CD14-positive monocyte (primary cell): ENCODE measurements at regions of chr10 and their contacts with region 1.

Region 1: GRCh38 chr10:46106410-46107255 is 60.6 kb upstream of the MSMB start:
- DNase-seq: peak; percentile 24 to 52 (median 40)
- H3K4me3 ChIP-seq: peak overlapping the region; percentile 47 to 77 (median 72)
- H3K4me3 Mint-ChIP-seq: peak overlapping the region; percentile 79 to 96
- H3K27ac ChIP-seq: peak overlapping the region in 1 of 2 donors; percentile 64
- H3K27ac Mint-ChIP-seq: peak overlapping the region in 3 of 7 donors; percentile 46 to 79 (median 70)
- H3K4me1 ChIP-seq: peaks cover 5 to 26% of the 10 kb centered on the region in 2 donors
- H3K4me1 Mint-ChIP-seq: peaks cover 22% of the 10 kb centered on the region
- H3K27me3 ChIP-seq: peaks cover 8% of the 10 kb centered on the region in 2 donors
- H3K27me3 Mint-ChIP-seq: peaks cover 11 to 18% (median 15%) of the 10 kb centered on the region in 3 donors
- CTCF ChIP-seq: no peak

Region 2: DNA sequence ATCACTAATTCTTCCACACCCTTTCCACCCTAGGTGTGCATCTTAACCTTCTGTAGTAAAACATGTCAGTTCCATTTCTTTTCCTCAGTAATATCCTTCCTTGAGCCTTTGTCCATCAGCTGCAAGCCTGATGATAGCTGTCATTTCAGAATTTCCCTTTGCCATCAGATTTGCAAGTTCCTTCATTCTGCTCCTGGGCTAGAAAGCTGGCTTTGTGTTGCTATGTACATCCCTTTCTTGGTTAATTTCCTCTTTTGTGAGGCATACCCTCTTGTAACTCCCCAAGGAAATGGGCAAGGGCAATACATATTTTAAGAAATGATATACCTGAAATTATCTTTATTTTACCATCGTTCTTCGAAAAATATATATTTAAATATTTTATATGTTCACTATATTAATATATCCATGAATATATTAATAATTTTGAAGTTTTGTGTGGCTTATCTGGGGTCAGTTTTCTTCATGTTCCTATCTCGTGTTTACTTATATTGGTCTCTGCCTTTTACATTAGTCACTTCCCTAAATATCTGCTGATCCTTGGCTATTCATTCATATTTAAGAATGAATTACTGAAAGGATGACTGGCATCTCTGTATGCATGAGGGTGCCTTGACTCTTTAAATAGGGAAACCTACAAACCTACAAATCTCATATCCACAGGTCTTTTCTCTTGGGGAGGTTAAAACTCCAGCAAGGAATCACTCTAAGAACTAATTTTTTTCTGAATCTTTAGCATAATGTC is 962.1 kb before region 1 on chr10:
- intact Hi-C with region 1: no loop called
- DNase-seq: peak; percentile 3 to 56 (median 5)
- H3K4me3 ChIP-seq: no peak overlapping the region
- H3K4me3 Mint-ChIP-seq: no peak overlapping the region
- H3K27ac ChIP-seq: no peak overlapping the region
- H3K27ac Mint-ChIP-seq: peak overlapping the region in 1 of 7 donors; percentile 74
- H3K4me1 ChIP-seq: peaks cover 0 to 2% of the 10 kb centered on the region in 2 donors
- H3K4me1 Mint-ChIP-seq: peaks cover 9% of the 10 kb centered on the region
- H3K27me3 ChIP-seq: no peaks in the 10 kb centered on the region
- H3K27me3 Mint-ChIP-seq: no peaks in the 10 kb centered on the region
- CTCF ChIP-seq: no peak

Region 3: DNA sequence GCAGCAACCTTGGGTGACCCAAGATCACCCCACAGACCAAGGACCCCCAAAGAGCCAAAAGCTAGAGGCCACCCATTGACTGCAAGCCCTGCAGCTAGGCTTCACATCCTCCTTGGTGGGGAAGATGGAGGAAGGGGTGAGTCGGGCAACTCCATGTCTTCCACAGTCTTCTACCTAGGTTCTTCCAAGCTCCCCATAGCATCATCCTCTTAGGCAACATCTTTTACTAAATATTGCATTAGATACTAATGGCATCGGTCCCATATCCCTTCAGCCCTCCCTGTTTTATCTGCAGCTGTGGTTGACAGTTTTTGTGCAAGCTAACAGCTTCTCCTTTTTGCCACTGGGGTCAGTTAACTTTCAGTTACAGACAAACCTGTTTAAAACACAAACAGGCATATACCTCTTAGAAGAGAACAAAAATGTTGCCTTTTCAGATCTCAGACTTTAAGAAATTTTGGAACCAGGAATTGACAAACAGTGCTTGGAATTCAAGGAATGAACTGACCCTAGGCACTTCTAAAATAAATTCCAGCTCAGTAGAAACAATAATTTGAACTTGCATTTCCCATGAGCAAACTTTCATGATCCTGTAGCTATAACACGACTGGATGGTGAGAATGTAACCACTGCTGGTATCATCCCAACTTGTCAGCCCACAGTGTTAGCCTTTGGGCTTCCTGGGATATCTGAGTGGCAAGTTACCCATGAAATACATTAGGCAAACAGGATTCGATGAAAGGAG is 26.6 kb before region 1 on chr10:
- intact Hi-C with region 1: no loop called
- DNase-seq: peak; percentile 38 to 54 (median 50)
- H3K4me3 ChIP-seq: peak overlapping the region in 1 of 3 experiments; percentile 29
- H3K4me3 Mint-ChIP-seq: peak overlapping the region in 1 of 2 donors; percentile 70
- H3K27ac ChIP-seq: peak overlapping the region; percentile 58 to 87
- H3K27ac Mint-ChIP-seq: peak overlapping the region; percentile 74 to 96 (median 88)
- H3K4me1 ChIP-seq: peaks cover 51 to 61% of the 10 kb centered on the region in 2 donors
- H3K4me1 Mint-ChIP-seq: peaks cover 66% of the 10 kb centered on the region
- H3K27me3 ChIP-seq: no peaks in the 10 kb centered on the region
- H3K27me3 Mint-ChIP-seq: peaks cover 0 to 2% (median 0%) of the 10 kb centered on the region in 3 donors
- CTCF ChIP-seq: no peak

Region 4: GRCh38 chr10:46216836-46217751 is 110.5 kb after region 1 on chr10:
- intact Hi-C with region 1: no loop called
- DNase-seq: peak in 2 of 3 donors; percentile 5 to 15
- H3K4me3 ChIP-seq: no peak overlapping the region
- H3K4me3 Mint-ChIP-seq: peak overlapping the region; percentile 62
- H3K27ac ChIP-seq: no peak overlapping the region
- H3K27ac Mint-ChIP-seq: peak overlapping the region in 1 of 7 donors; percentile 64
- H3K4me1 ChIP-seq: no peaks in the 10 kb centered on the region
- H3K4me1 Mint-ChIP-seq: peaks cover 14% of the 10 kb centered on the region
- H3K27me3 ChIP-seq: no peaks in the 10 kb centered on the region
- H3K27me3 Mint-ChIP-seq: peaks cover 0 to 6% (median 2%) of the 10 kb centered on the region in 3 donors
- CTCF ChIP-seq: no peak

Region 5: DNA sequence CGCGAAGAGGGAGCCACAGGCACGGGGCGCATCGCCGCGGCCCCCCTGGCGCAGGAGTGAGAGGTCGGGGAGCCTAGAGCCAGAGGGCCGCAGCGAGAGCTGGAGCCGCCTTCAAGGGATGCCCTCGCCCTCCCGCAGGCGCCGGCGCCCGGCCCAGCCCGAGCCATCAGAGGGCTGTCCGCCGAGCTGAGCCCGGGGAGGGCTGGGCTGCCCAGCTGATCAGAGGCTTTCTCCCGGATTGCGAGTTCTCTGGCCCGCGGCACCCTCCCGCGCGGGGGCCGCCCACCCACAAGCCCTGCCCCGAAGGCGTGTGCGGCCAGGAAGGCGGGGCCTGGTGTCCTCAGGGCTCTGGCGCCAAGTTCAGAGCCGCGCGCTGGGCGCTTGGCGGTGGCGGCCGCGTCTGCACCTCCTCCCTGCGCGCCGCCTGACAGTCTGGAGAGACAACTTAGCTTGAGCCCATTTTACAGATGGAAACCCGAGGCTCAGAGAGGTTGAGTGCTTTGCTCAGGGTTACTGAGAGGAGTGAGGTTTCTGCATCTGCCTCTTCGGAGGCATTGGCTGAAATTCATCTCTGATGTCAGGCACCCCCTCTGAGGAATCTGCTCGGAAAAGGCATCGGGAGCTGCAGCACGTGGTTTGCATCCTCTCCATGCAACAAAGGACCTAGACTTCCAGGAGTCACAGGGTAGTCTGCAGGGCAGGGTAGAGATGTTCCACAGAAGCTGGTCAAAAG is 176.4 kb after region 1 on chr10:
- intact Hi-C with region 1: loop called in 1 of 2 experiments (anchors 2 kb)
- DNase-seq: peak; percentile 37 to 67 (median 56)
- H3K4me3 ChIP-seq: peak overlapping the region in 2 of 3 experiments; percentile 45 to 73
- H3K4me3 Mint-ChIP-seq: peak overlapping the region; percentile 69 to 94
- H3K27ac ChIP-seq: no peak overlapping the region
- H3K27ac Mint-ChIP-seq: peak overlapping the region in 1 of 7 donors; percentile 55
- H3K4me1 ChIP-seq: peaks cover 39 to 46% of the 10 kb centered on the region in 2 donors
- H3K4me1 Mint-ChIP-seq: peaks cover 33% of the 10 kb centered on the region
- H3K27me3 ChIP-seq: peaks cover 14 to 24% of the 10 kb centered on the region in 2 donors
- H3K27me3 Mint-ChIP-seq: peaks cover 24 to 36% (median 32%) of the 10 kb centered on the region in 3 donors
- CTCF ChIP-seq: no peak